Heart left ventricle (tissue), 16 donors: ENCODE measurements at regions of chr1 and their contacts with region 1.

Region 1: DNA sequence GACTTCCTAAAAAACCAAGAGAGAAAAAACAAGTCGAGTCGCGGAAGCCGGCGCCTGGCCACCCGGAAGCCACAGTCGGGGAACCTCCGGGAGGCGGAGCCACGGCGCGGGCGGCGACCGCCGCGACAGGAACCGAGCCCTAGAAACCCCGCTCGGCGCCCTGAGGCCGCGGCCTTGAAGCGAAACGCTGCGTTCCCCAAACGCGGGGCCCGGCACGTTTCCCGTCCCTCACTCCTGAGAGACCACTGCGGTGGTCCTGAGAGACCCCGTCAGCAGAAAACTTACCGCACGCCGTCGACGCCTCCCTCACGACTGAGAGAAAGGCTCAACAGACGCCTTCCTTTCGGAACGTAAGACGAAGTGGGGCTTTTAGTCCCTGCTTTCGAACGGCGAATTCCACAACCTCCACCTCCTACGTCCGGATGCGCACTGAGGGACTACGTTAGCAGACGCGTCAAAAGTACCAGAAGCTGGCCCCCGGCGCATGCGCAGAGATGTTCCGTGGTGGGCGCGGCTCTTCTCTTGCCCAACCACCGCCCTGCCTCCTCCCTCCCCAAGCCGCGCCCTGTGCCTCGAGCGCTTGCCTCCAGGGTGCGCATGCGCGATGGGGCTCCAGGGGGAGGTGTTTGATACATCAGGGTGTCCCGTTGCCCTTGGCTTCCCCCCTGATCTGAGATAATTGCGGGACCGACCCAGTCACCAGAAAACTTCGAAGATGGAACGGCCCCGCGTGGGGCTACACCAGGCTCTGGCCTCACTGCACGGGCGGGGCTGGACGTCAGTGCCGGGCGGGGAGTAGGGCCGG is at the start of gene RSRP1:
- DNase-seq: peak; percentile 100
- ATAC-seq: peak; percentile 92 to 97 (median 96)
- H3K4me3 ChIP-seq: peak within 1 kb of the TSS; percentile 63 to 98 (median 80)
- H3K27ac ChIP-seq: peak within 1 kb of the TSS; percentile 95 to 100 (median 100)
- H3K4me1 ChIP-seq: peaks cover 7 to 46% (median 27%) of the 10 kb centered on the region in 12 donors
- H3K27me3 ChIP-seq: no peaks in the 10 kb centered on the region
- CTCF ChIP-seq: peak in 4 of 12 donors; percentile 12 to 27 (median 14)
- POLR2A ChIP-seq: peak; percentile 85 to 100
- total RNA-seq, gene RSRP1: 14.4 to 51.4 (median 29.4) TPM

Region 2: DNA sequence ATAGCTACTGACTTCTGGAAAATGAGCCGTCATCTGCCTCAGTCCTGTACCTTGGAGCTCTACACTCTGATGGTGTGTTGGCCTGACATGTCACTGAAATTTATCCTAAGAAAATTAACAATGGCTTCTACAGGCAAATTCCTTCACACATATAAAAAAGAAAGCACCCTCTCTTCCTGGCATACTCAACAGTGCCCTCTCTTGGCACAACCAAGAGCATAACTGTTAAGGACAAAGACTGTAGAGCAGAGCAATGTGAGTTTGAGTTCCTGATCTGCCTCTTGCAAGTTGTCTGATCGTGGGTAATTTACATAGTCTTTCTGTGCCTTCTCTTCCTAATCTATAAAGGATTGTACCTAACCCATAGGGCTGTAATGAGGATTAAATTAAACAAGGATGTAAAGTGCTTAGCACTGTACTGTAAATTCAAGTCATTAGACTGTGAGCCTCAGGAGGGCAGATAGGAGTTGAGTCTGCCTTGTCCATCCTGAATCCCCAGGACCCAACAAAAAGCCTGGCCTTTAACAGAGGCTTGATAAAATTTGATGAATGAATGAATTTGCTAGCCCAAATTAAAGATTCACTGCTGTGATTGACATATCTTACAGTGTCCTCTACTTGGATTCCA is 98.4 kb before region 1 on chr1:
- intact Hi-C with region 1: no loop called
- DNase-seq: no peak
- ATAC-seq: no peak
- H3K4me3 ChIP-seq: no peak overlapping the region
- H3K27ac ChIP-seq: no peak overlapping the region
- H3K4me1 ChIP-seq: no peaks in the 10 kb centered on the region
- H3K27me3 ChIP-seq: peaks cover 0 to 43% (median 12%) of the 10 kb centered on the region in 9 donors
- CTCF ChIP-seq: peak in 9 of 12 donors; percentile 15 to 46 (median 33)
- POLR2A ChIP-seq: no peak

Region 3: GRCh38 chr1:25338188-25338981 is 91.2 kb after region 1 on chr1 and contains the start of gene TMEM50A:
- intact Hi-C with region 1: loop called in 3 of 10 experiments (anchors 2 to 5 kb)
- DNase-seq: peak; percentile 91 to 96 (median 92)
- ATAC-seq: peak; percentile 96 to 98 (median 98)
- H3K4me3 ChIP-seq: peak within 1 kb of the TSS; percentile 59 to 99 (median 93)
- H3K27ac ChIP-seq: peak within 1 kb of the TSS; percentile 93 to 99 (median 97)
- H3K4me1 ChIP-seq: peaks cover 0 to 35% (median 24%) of the 10 kb centered on the region in 12 donors
- H3K27me3 ChIP-seq: no peaks in the 10 kb centered on the region
- CTCF ChIP-seq: peak in 1 of 12 donors; percentile 5
- POLR2A ChIP-seq: peak in 1 of 2 donors; percentile 88
- total RNA-seq, gene TMEM50A: 53.5 to 112 (median 94.5) TPM

Region 4: DNA sequence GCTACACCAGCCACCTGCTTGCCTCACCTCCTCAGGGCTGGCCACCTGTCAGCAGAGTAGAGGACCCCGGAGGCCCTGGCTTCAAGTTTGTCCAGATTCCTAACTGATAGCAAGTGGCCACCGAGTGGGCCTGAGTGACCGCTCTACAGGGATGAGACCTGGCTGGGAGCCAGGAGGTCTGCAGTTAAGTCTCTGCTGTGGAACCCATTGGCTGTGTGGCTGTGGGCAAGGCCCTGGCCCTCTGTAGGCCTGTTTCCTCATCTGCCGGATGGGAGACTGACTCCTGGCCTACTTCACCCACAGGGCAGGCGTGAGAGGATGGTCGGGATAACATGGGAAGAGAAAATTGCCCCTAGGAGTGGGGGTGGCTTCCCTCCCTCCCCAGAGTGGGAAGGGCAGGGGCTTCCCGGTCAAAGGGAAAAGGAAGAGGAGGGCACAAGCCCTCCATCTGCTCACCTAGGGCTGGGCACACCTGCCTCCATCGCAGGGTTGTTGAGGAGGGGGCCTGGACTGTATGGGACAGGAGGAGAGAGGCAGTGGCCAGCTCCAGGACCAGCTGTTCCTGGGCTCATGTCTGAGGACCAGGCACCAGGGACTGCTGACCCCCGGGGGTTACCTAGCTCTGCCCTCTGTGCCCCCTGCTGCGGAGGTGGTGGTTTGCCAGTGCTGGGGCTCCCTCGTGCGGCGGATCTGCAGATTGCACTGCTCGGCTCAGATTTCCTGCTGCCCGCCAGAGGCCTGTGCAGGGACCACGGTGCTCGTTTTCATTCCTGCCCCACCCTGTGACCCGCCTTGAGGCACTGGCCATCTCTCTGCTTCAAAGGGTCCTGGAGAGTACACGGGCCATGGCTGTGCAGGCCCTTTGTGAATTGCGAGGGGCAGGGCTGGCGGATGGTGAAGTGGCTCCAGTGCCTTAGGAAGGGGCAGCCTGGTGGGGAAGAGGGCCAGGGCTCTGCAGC is 563.4 kb after region 1 on chr1:
- intact Hi-C with region 1: loop called in 3 of 10 experiments (anchors 5 to 10 kb)
- DNase-seq: peak; percentile 61 to 87 (median 73)
- ATAC-seq: peak; percentile 27 to 63 (median 46)
- H3K4me3 ChIP-seq: no peak overlapping the region
- H3K27ac ChIP-seq: peak overlapping the region in 1 of 12 donors; percentile 6
- H3K4me1 ChIP-seq: peaks cover 0 to 45% (median 32%) of the 10 kb centered on the region in 12 donors
- H3K27me3 ChIP-seq: no peaks in the 10 kb centered on the region
- CTCF ChIP-seq: peak; percentile 84 to 94 (median 89)
- POLR2A ChIP-seq: no peak

Region 5: GRCh38 chr1:25819576-25820246 is 572.5 kb after region 1 on chr1 and contains the start of gene MTFR1L:
- intact Hi-C with region 1: loop called in 2 of 10 experiments (anchors 5 to 10 kb)
- DNase-seq: peak; percentile 90 to 93 (median 92)
- ATAC-seq: peak; percentile 89 to 91 (median 90)
- H3K4me3 ChIP-seq: peak within 1 kb of the TSS; percentile 74 to 98 (median 89)
- H3K27ac ChIP-seq: peak within 1 kb of the TSS; percentile 81 to 98 (median 92)
- H3K4me1 ChIP-seq: peaks cover 0 to 59% (median 34%) of the 10 kb centered on the region in 12 donors
- H3K27me3 ChIP-seq: no peaks in the 10 kb centered on the region
- CTCF ChIP-seq: no peak
- POLR2A ChIP-seq: peak in 1 of 2 donors; percentile 89
- total RNA-seq, gene MTFR1L: 123 to 319 (median 214) TPM